ENCODE measurements at regions of chr19 and their contacts with region 1.

Region 1: DNA sequence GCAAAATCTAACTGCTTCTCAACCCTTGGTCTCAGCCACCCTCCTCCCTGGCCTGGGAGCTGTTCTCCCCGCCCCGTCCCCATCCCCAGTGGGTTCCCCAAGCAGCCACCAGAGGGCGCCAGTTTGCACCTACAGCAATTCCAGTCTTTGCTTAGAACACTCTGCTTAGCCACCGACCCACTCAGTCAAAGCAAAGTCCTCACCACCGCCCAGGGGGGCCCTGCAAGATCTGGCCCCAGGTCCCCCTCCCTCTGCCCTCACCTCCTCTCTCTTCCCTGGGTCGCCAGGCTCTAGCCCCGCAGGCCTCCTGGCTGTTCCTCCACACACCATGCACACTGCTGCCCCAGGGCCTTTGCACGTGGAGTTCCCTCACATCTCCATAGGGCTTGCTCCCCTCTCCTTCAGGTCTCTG is 12.4 kb downstream of the TMEM143 start:
- H3K4me3 ChIP-seq: no peak overlapping the region
- H3K27ac ChIP-seq: no peak overlapping the region
- H3K4me1 ChIP-seq: no peaks in the 10 kb centered on the region
- CTCF ChIP-seq: peak; percentile 80

Region 2: GRCh38 chr19:48340995-48341394 is 10.4 kb before region 1 on chr19:
- CTCF ChIA-PET with region 1: interaction called, 18 read pairs
- POLR2A ChIA-PET with region 1: no interaction called
- H3K4me3 ChIP-seq: no peak overlapping the region
- H3K27ac ChIP-seq: no peak overlapping the region
- H3K4me1 ChIP-seq: no peaks in the 10 kb centered on the region
- CTCF ChIP-seq: no peak

Region 3: GRCh38 chr19:48370955-48371354 is 19.6 kb after region 1 on chr19:
- CTCF ChIA-PET with region 1: no interaction called
- POLR2A ChIA-PET with region 1: no interaction called
- H3K4me3 ChIP-seq: no peak overlapping the region
- H3K27ac ChIP-seq: no peak overlapping the region
- H3K4me1 ChIP-seq: peaks cover 12% of the 10 kb centered on the region
- CTCF ChIP-seq: no peak

Measured in HEK293 (cell line).